ENCODE measurements at regions of chr7 and their contacts with region 1.

Region 1: GRCh38 chr7:29194594-29195427 is at the start of gene CHN2:
- DNase-seq: peak; percentile 73
- ATAC-seq: peak; percentile 78
- H3K4me3 ChIP-seq: peak within 1 kb of the TSS; percentile 92 to 98 (median 98)
- H3K27ac ChIP-seq: peak within 1 kb of the TSS; percentile 88
- H3K4me1 ChIP-seq: peaks cover 80% of the 10 kb centered on the region
- H3K27me3 ChIP-seq: no peaks in the 10 kb centered on the region; a peak in 1 of 5 replicates
- CTCF ChIP-seq: peak; percentile 40; the same call in 1 of the 2 replicates
- EP300 ChIP-seq: no peak
- POLR2A ChIP-seq: peak in 1 of 2 experiments; percentile 75; a peak in 2 of 4 replicates
- RAD21 ChIP-seq: no peak; the same call in none of the 2 replicates
- total RNA-seq, gene CHN2: 23.5 and 28.6 TPM in 2 replicates

Region 2: DNA sequence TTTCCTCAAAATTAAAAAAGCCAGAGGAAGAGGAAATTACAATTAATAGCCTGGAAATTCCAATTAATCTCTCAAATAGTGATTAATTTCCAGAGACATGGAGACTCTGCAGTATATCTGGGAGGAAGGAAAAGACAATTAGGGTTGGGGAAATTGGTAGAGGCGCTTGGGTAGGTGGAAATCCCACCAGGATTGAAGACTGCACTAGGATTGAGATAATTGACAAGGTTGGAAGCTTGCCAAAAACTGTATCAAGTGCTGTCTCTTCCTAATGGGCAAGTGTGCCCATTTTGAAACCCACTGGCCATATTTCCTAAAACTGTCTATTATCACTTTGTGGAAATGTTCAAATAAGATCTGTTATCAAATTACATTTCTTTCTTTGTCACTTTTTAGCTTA is 21.3 kb after region 1 on chr7:
- CTCF ChIA-PET with region 1: no interaction called
- POLR2A ChIA-PET with region 1: interaction called, 3 read pairs
- in situ Hi-C with region 1: no loop called
- intact Hi-C with region 1: loop called (anchors 1 kb)
- DNase-seq: no peak
- ATAC-seq: no peak
- H3K4me3 ChIP-seq: no peak overlapping the region
- H3K27ac ChIP-seq: no peak overlapping the region
- H3K4me1 ChIP-seq: peaks cover 34% of the 10 kb centered on the region
- H3K27me3 ChIP-seq: no peaks in the 10 kb centered on the region
- CTCF ChIP-seq: no peak
- EP300 ChIP-seq: no peak
- POLR2A ChIP-seq: no peak
- RAD21 ChIP-seq: no peak